Endothelial cell of umbilical vein (primary cell): ENCODE measurements at regions of chr14 and their contacts with region 1.

Region 1: GRCh38 chr14:68495101-68496039 is 297.5 kb downstream of the ZFP36L1 start:
- DNase-seq: peak; percentile 81
- H3K4me3 ChIP-seq: no peak overlapping the region
- H3K27ac ChIP-seq: peak overlapping the region; percentile 0
- H3K4me1 ChIP-seq: peaks cover 23% of the 10 kb centered on the region
- H3K27me3 ChIP-seq: no peaks in the 10 kb centered on the region
- CTCF ChIP-seq: no peak
- POLR2A ChIP-seq: no peak

Region 2: GRCh38 chr14:68312884-68313610 is 182.3 kb before region 1 on chr14:
- CTCF ChIA-PET with region 1: no interaction called
- POLR2A ChIA-PET with region 1: no interaction called
- dilution Hi-C with region 1: no loop called
- intact Hi-C with region 1: no loop called
- DNase-seq: no peak
- H3K4me3 ChIP-seq: no peak overlapping the region
- H3K27ac ChIP-seq: no peak overlapping the region
- H3K4me1 ChIP-seq: peaks cover 9% of the 10 kb centered on the region
- H3K27me3 ChIP-seq: no peaks in the 10 kb centered on the region
- CTCF ChIP-seq: no peak
- POLR2A ChIP-seq: no peak

Region 3: DNA sequence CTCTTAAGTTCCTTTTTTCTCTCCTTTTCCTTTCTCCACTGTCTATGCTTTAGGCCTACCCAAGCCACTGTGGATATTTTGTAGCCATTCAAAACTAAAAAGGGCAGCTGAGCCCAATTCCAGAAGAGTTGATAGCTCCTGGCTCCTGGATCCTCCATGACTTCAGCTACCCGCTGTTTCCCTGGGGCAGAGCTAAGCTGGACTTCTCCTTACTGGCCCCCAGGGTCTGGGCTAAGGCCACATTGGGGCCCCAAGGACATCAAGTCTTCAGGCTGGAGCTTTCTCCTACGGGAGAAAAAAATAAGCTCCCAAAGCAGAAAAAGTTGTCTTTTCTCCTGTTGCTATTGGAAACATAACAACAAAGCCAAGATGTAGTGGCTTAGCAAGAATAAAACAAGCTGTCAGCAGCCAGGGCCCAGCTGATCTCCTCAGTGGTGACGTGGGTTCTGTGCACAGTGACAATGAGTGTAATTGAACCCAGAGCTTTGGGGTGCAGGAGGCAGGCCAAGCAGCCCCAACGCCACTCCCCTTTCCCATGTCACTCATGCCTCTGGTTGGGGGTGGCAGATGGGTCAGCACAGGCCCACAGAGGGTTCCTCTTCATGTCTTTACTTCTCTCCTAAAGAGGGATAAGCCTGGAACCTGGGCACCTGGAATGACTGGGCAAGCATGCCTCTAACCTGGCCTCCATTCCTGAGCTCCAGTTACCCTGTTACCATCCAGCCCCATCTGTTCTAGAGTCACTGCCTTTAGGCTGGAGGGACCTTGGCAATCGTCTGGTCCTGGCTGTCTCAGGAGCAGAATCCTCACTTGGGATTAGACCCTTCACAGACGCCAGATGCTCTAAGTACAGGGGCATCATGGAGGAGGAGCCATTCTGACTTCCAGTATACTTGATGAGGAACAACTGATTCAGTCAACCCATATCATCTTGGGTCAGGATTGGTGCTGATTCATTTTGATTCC is 126.3 kb after region 1 on chr14:
- CTCF ChIA-PET with region 1: no interaction called
- POLR2A ChIA-PET with region 1: no interaction called
- dilution Hi-C with region 1: no loop called
- intact Hi-C with region 1: no loop called
- DNase-seq: no peak
- H3K4me3 ChIP-seq: no peak overlapping the region
- H3K27ac ChIP-seq: no peak overlapping the region
- H3K4me1 ChIP-seq: no peaks in the 10 kb centered on the region
- H3K27me3 ChIP-seq: no peaks in the 10 kb centered on the region
- CTCF ChIP-seq: no peak
- POLR2A ChIP-seq: no peak

Region 4: GRCh38 chr14:68780358-68781160 is 285.2 kb after region 1 on chr14:
- CTCF ChIA-PET with region 1: no interaction called
- POLR2A ChIA-PET with region 1: no interaction called
- dilution Hi-C with region 1: no loop called
- intact Hi-C with region 1: loop called (anchors 2 kb)
- DNase-seq: peak; percentile 57
- H3K4me3 ChIP-seq: no peak overlapping the region
- H3K27ac ChIP-seq: peak overlapping the region; percentile 51
- H3K4me1 ChIP-seq: peaks cover 43% of the 10 kb centered on the region
- H3K27me3 ChIP-seq: no peaks in the 10 kb centered on the region
- CTCF ChIP-seq: no peak
- POLR2A ChIP-seq: no peak